ENCODE measurements at regions of chr19 and their contacts with region 1.

Region 1: GRCh38 chr19:14073261-14073924 is 807 bp downstream of the MISP3 start:
- DNase-seq: peak; percentile 55 to 92 (median 72)
- ATAC-seq: peak; percentile 79
- H3K4me3 ChIP-seq: peak overlapping the region; percentile 77
- H3K4me3 Mint-ChIP-seq: peak overlapping the region; percentile 93
- H3K27ac ChIP-seq: no peak overlapping the region
- H3K27ac Mint-ChIP-seq: peak overlapping the region; percentile 83
- H3K4me1 ChIP-seq: peaks cover 38% of the 10 kb centered on the region
- H3K4me1 Mint-ChIP-seq: peaks cover 17% of the 10 kb centered on the region
- H3K27me3 ChIP-seq: peaks cover 4 to 5% of the 10 kb centered on the region in 2 experiments
- H3K27me3 Mint-ChIP-seq: peaks cover 4% of the 10 kb centered on the region
- CTCF ChIP-seq: no peak

Region 2: GRCh38 chr19:13597640-13598039 is 475.8 kb before region 1 on chr19:
- CTCF ChIA-PET with region 1: no interaction called
- POLR2A ChIA-PET with region 1: no interaction called
- intact Hi-C with region 1: loop called in 1 of 2 experiments (anchors 2 kb)
- DNase-seq: peak in 12 of 14 experiments; percentile 9 to 77 (median 37)
- ATAC-seq: peak; percentile 69
- H3K4me3 ChIP-seq: no peak overlapping the region
- H3K4me3 Mint-ChIP-seq: no peak overlapping the region
- H3K27ac ChIP-seq: no peak overlapping the region
- H3K27ac Mint-ChIP-seq: no peak overlapping the region
- H3K4me1 ChIP-seq: peaks cover 3% of the 10 kb centered on the region
- H3K4me1 Mint-ChIP-seq: no peaks in the 10 kb centered on the region
- H3K27me3 ChIP-seq: peaks cover 0 to 3% of the 10 kb centered on the region in 2 experiments
- H3K27me3 Mint-ChIP-seq: peaks cover 25% of the 10 kb centered on the region
- CTCF ChIP-seq: peak; percentile 48

Region 3: DNA sequence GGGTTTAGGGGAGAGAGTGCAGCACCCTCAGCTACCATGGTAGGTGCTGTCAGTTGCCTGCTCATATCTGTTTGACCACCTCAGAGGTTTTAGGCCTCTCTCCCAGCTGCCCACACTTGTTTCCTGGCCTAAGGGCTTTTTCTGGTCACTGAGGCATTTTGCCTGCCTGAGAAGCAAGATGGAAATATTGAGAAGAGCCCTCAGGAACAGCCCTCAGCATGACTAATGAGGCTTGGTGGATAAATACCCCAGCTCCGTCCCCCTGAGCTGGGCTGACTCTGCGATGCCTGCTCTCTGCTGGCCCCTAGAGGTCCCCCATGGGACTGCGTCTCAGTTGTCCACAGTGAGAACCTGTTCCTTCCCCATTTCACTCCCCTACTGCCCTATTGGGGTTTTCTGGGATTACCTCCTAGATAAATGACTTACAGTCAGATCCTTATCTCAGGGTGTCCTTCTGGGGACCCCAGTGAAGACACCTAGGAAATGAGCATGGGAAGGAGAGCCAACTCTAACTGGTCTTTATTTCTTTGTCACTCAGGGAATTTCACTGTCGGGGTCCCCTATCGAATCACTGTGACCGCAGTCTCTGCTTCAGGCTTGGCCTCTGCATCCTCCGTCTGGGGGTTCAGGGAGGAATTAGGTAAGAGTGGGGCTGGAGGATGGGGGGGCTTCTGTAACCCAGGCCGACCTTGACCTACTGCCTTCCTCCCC is 24.8 kb before region 1 on chr19:
- CTCF ChIA-PET with region 1: interaction called, 14 read pairs
- POLR2A ChIA-PET with region 1: interaction called, 3 read pairs
- intact Hi-C with region 1: loop called in 1 of 2 experiments (anchors 1 kb)
- DNase-seq: peak; percentile 53 to 84 (median 73)
- ATAC-seq: peak; percentile 94
- H3K4me3 ChIP-seq: no peak overlapping the region
- H3K4me3 Mint-ChIP-seq: no peak overlapping the region
- H3K27ac ChIP-seq: no peak overlapping the region
- H3K27ac Mint-ChIP-seq: peak overlapping the region; percentile 67
- H3K4me1 ChIP-seq: peaks cover 8% of the 10 kb centered on the region
- H3K4me1 Mint-ChIP-seq: peaks cover 10% of the 10 kb centered on the region
- H3K27me3 ChIP-seq: no peaks in the 10 kb centered on the region
- H3K27me3 Mint-ChIP-seq: no peaks in the 10 kb centered on the region
- CTCF ChIP-seq: peak; percentile 97

Region 4: GRCh38 chr19:14059093-14059480 is 14.3 kb before region 1 on chr19:
- CTCF ChIA-PET with region 1: interaction called, 11 read pairs
- POLR2A ChIA-PET with region 1: interaction called, 3 read pairs
- intact Hi-C with region 1: no loop called
- DNase-seq: peak in 11 of 14 experiments; percentile 31 to 74 (median 39)
- ATAC-seq: peak; percentile 59
- H3K4me3 ChIP-seq: no peak overlapping the region
- H3K4me3 Mint-ChIP-seq: peak overlapping the region; percentile 58
- H3K27ac ChIP-seq: no peak overlapping the region
- H3K27ac Mint-ChIP-seq: no peak overlapping the region
- H3K4me1 ChIP-seq: peaks cover 24% of the 10 kb centered on the region
- H3K4me1 Mint-ChIP-seq: peaks cover 16% of the 10 kb centered on the region
- H3K27me3 ChIP-seq: peaks cover 28 to 32% of the 10 kb centered on the region in 2 experiments
- H3K27me3 Mint-ChIP-seq: peaks cover 34% of the 10 kb centered on the region
- CTCF ChIP-seq: peak; percentile 72

Region 5: GRCh38 chr19:14117668-14118164 is 44.3 kb after region 1 on chr19 and contains the start of gene PRKACA:
- CTCF ChIA-PET with region 1: interaction called, 4 read pairs
- POLR2A ChIA-PET with region 1: interaction called, 3 read pairs
- intact Hi-C with region 1: loop called in 1 of 2 experiments (anchors 5 kb)
- DNase-seq: peak; percentile 94 to 99 (median 97)
- ATAC-seq: peak; percentile 87
- H3K4me3 ChIP-seq: peak within 1 kb of the TSS; percentile 86
- H3K4me3 Mint-ChIP-seq: peak within 1 kb of the TSS; percentile 97
- H3K27ac ChIP-seq: peak within 1 kb of the TSS; percentile 65 to 83
- H3K27ac Mint-ChIP-seq: peak within 1 kb of the TSS; percentile 93
- H3K4me1 ChIP-seq: peaks cover 59% of the 10 kb centered on the region
- H3K4me1 Mint-ChIP-seq: peaks cover 55% of the 10 kb centered on the region
- H3K27me3 ChIP-seq: no peaks in the 10 kb centered on the region
- H3K27me3 Mint-ChIP-seq: no peaks in the 10 kb centered on the region
- CTCF ChIP-seq: no peak
- total RNA-seq, gene PRKACA: 27.4 to 29.8 TPM

Region 6: GRCh38 chr19:14160017-14160703 is 86.8 kb after region 1 on chr19:
- CTCF ChIA-PET with region 1: no interaction called
- POLR2A ChIA-PET with region 1: no interaction called
- intact Hi-C with region 1: no loop called
- DNase-seq: no peak
- ATAC-seq: no peak
- H3K4me3 ChIP-seq: no peak overlapping the region
- H3K4me3 Mint-ChIP-seq: no peak overlapping the region
- H3K27ac ChIP-seq: no peak overlapping the region
- H3K27ac Mint-ChIP-seq: no peak overlapping the region
- H3K4me1 ChIP-seq: peaks cover 5% of the 10 kb centered on the region
- H3K4me1 Mint-ChIP-seq: no peaks in the 10 kb centered on the region
- H3K27me3 ChIP-seq: no peaks in the 10 kb centered on the region
- H3K27me3 Mint-ChIP-seq: no peaks in the 10 kb centered on the region
- CTCF ChIP-seq: no peak

Region 7: GRCh38 chr19:14333101-14333871 is 259.9 kb after region 1 on chr19:
- CTCF ChIA-PET with region 1: no interaction called
- POLR2A ChIA-PET with region 1: no interaction called
- intact Hi-C with region 1: no loop called
- DNase-seq: peak in 4 of 14 experiments; percentile 5 to 31 (median 18)
- ATAC-seq: no peak
- H3K4me3 ChIP-seq: peak overlapping the region; percentile 38
- H3K4me3 Mint-ChIP-seq: peak overlapping the region; percentile 25
- H3K27ac ChIP-seq: no peak overlapping the region
- H3K27ac Mint-ChIP-seq: no peak overlapping the region
- H3K4me1 ChIP-seq: peaks cover 8% of the 10 kb centered on the region
- H3K4me1 Mint-ChIP-seq: peaks cover 5% of the 10 kb centered on the region
- H3K27me3 ChIP-seq: no peaks in the 10 kb centered on the region
- H3K27me3 Mint-ChIP-seq: no peaks in the 10 kb centered on the region
- CTCF ChIP-seq: no peak

Region 8: GRCh38 chr19:14517840-14518505 is 444.6 kb after region 1 on chr19 and contains the start of gene DNAJB1:
- CTCF ChIA-PET with region 1: no interaction called
- POLR2A ChIA-PET with region 1: no interaction called
- intact Hi-C with region 1: no loop called
- DNase-seq: peak in 11 of 14 experiments; percentile 49 to 98 (median 67)
- ATAC-seq: peak; percentile 7
- H3K4me3 ChIP-seq: peak within 1 kb of the TSS; percentile 93
- H3K4me3 Mint-ChIP-seq: peak within 1 kb of the TSS; percentile 100
- H3K27ac ChIP-seq: peak within 1 kb of the TSS; percentile 91 to 97
- H3K27ac Mint-ChIP-seq: peak within 1 kb of the TSS; percentile 100
- H3K4me1 ChIP-seq: peaks cover 79% of the 10 kb centered on the region
- H3K4me1 Mint-ChIP-seq: peaks cover 82% of the 10 kb centered on the region
- H3K27me3 ChIP-seq: no peaks in the 10 kb centered on the region
- H3K27me3 Mint-ChIP-seq: no peaks in the 10 kb centered on the region
- CTCF ChIP-seq: no peak
- total RNA-seq, gene DNAJB1: 666 to 672 TPM

Measured in CD4-positive, alpha-beta T cell (primary cell).